Pancreas (tissue), 10 donors: ENCODE measurements at regions of chr17 and their contacts with region 1.

Region 1: DNA sequence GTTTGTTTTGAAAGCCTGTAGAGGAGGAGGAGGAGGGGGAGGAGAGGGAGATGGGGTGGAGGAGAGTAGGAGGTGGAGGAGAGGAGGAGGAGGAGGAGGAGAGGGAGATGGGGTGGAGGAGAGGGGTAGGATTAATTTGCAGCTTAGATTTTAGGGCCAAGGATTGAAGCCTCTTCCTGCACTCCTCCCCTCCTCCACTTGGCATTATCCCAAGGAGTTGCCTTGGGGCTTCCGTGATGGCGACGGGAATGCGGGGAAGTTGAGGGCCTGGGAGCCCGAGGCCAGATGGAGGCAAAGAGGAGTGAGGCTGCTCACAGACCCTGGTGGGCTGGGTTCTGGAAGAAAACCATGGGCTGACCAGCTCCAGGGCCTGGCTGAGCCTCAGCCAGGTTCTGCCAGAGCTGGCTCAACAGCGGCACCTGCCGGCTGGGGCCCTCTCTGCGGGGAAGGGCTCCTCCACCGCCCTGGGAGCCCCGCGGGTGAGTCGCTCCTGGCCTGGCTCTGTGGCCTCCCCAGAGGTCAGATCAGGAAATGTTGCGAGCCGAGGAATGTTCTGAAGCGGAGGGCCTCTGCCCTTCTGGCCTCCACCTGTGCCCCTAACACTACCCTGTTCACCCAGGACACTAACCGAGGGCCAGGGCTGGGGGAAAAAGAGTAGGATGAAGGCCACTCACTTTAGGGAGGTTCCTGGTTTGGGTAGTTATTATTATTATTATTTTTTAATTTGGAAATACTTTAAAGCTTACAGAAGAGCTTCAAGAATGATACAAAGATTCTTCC is 23.9 kb upstream of the FMNL1 start:
- DNase-seq: peak; percentile 90 to 100 (median 96)
- ATAC-seq: peak; percentile 99 to 100 (median 100)
- H3K4me3 ChIP-seq: no peak overlapping the region
- H3K27ac ChIP-seq: peak overlapping the region in 3 of 4 donors; percentile 1 to 58 (median 33)
- H3K4me1 ChIP-seq: no peaks in the 10 kb centered on the region
- H3K27me3 ChIP-seq: no peaks in the 10 kb centered on the region
- CTCF ChIP-seq: peak; percentile 97 to 100 (median 98)

Region 2: GRCh38 chr17:45110668-45111611 is 86.8 kb before region 1 on chr17:
- intact Hi-C with region 1: no loop called
- DNase-seq: no peak
- ATAC-seq: peak in 2 of 4 donors; percentile 28 to 29
- H3K4me3 ChIP-seq: no peak overlapping the region
- H3K27ac ChIP-seq: no peak overlapping the region
- H3K4me1 ChIP-seq: no peaks in the 10 kb centered on the region
- H3K27me3 ChIP-seq: no peaks in the 10 kb centered on the region
- CTCF ChIP-seq: no peak

Region 3: DNA sequence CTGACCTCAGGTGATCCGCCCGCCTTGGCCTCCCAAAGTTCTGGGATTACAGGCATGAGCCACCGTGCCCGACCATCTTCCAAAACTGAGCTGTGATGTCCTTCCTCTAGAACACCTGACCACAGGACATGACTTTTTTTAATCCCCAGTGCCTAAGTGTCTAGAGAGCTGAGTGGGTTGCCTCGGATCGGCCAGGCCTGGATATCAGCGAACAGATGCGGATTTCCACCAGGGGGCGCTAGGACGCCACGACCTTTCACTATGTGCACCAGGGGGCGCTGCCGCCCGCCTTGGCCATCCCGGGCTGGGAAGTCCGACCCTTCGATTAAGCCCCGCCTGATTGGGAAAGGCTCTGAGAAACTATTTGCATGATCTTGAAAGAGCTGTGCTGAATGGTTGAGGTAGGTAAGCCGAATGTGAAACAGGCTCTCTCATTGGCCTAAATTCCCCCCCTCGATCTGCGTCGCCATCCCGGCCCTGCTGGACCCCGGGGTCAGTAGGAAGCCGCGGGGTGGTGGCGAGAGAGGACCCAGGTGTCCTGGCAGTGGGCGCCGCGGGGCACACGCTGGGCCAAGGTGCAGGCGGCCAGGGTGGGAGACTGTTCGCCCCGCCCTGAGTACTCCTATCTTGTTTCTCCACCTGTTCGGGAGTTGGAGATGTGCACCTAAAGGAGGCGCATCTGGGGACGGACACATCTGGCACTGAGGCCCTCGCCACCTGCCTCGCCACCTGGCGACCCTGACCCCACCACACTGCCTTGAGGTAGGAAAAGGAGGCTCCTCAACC is 62.4 kb before region 1 on chr17 and contains the start of gene ACBD4:
- intact Hi-C with region 1: loop called in 2 of 3 experiments (anchors 5 kb)
- DNase-seq: peak; percentile 94 to 99 (median 96)
- ATAC-seq: peak; percentile 77 to 90 (median 84)
- H3K4me3 ChIP-seq: peak within 1 kb of the TSS; percentile 71 to 82 (median 81)
- H3K27ac ChIP-seq: peak within 1 kb of the TSS; percentile 53 to 79 (median 69)
- H3K4me1 ChIP-seq: peaks cover 0 to 16% (median 0%) of the 10 kb centered on the region in 3 donors
- H3K27me3 ChIP-seq: no peaks in the 10 kb centered on the region
- CTCF ChIP-seq: peak; percentile 100
- total RNA-seq, gene ACBD4: 10.6 to 17.8 (median 12.1) TPM